Aorta (tissue), 5 donors: ENCODE measurements at regions of chr7 and their contacts with region 1.

Region 1: DNA sequence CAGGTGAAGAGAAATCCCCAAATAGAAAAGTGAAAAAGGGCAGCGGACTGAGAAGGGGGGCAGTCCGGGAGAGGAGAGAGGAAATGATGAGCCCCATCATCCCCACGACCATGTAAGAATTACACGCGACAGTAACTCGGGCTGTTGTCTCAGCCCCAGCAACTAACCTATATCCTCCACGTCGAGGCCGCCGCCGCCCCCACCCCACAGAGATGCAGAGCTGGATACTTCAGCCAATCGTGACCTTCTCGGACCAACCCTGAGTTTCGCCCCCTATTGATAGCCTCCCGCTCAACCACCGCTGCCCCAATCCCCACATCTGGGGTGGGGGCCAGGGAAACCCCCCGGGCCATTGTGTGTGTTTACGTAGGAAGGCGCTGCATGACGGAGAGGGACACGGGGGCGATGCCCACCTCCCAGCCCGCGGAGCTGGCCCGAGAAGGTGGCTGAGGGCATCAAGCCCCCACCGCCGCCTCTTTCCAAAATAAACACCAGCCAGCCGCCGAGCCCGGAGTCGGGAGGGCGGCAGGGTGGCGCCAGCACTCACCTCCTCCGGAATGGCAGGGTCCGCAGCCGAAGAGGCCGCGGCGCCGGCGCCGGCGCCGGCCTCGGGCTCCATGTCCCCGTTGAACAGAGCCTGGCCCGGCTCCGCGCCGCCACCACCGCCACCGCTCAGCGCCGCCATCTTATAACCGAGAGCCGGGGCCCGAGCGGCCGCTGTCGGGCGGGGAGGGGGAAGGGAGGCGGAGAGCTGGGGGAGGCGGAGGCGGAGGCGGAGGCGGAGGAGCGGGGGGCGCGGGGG is 509 bp downstream of the BRAF start:
- DNase-seq: peak; percentile 85 to 93
- ATAC-seq: peak; percentile 88
- H3K4me3 ChIP-seq: peak overlapping the region; percentile 93 to 99
- H3K27ac ChIP-seq: peak overlapping the region; percentile 90 to 99
- H3K4me1 ChIP-seq: no peaks in the 10 kb centered on the region
- H3K27me3 ChIP-seq: no peaks in the 10 kb centered on the region

Region 2: DNA sequence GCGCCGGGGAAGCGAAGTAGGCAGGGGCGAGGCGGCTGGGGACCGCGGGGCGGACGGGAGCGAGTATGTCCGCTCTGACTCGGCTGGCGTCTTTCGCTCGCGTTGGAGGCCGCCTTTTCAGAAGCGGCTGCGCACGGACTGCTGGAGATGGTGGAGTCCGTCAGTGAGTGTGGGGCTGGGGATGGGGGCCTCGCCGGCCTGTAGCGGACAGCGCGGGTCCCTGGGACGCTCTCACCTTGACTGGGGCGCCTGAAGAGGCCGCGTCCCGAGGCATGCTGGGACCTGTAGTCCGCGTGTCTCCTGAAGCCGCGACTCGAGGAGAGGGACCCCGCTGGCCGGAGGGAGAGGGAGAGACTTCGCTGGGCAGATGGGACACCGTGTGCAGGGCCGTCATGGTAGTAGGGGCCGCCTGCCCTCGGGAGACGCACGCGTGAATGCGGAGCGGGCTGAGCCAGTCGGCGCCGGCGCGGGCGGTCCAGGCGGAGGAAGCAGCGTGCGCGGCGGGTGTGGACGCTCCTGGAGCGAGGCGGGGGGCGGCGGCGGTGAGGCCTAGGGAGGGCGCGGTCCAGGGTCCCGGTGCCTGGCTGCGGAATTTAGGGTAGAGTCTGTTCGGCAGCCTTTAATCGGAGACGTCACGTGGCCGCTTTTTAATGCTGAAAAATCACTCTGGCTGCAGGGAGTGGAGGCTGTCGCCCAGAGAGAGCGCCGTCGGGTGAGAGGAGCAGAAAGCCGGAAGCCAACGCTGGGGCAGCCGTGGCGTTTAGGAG is 227.4 kb before region 1 on chr7 and contains the start of gene NDUFB2:
- intact Hi-C with region 1: loop called in 1 of 2 experiments (anchors 10 kb)
- DNase-seq: peak; percentile 86 to 93
- ATAC-seq: peak; percentile 98
- H3K4me3 ChIP-seq: peak within 1 kb of the TSS; percentile 56 to 63
- H3K27ac ChIP-seq: peak within 1 kb of the TSS; percentile 38 to 81
- H3K4me1 ChIP-seq: no peaks in the 10 kb centered on the region
- H3K27me3 ChIP-seq: no peaks in the 10 kb centered on the region
- total RNA-seq, gene NDUFB2: 106 to 124 TPM

Region 3: DNA sequence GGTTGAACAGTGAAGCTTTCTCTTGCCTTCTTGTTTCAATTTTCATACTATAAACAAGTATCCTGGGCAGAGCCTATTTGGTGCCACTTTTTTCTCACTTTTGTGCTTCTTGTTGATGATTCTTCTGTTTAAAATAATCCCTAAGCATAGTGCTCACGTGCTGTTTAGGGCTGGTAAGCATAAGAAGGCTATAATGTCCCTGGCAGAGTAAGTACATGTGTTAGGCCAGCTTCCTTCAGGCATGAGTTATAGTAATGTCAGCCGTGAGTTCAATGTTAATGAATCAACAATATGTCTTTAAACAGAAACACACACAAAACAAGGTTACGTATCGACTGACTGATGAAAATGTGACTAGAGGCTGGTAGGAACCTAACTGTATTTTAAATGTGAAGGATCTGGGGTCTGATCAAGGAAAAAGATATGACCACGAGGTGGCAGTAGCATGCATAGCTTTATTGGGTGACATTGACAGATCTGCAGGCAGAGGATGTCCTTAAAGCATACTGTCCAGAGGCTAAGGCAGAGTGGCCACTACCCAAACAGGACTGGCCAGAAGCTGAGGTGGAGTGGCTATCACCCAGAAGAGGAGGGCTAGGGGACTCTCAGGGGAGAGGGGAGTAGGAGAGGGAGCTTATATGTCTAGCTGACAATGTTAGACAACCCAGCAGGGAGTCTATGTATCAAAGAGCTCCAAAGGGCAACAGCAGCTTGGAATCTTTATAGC is 113.2 kb before region 1 on chr7:
- intact Hi-C with region 1: loop called in 1 of 2 experiments (anchors 5 kb)
- DNase-seq: peak in 1 of 2 donors; percentile 53
- ATAC-seq: peak; percentile 85
- H3K4me3 ChIP-seq: no peak overlapping the region
- H3K27ac ChIP-seq: no peak overlapping the region
- H3K4me1 ChIP-seq: no peaks in the 10 kb centered on the region
- H3K27me3 ChIP-seq: no peaks in the 10 kb centered on the region